ENCODE measurements at regions of chr2 and their contacts with region 1.

Region 1: DNA sequence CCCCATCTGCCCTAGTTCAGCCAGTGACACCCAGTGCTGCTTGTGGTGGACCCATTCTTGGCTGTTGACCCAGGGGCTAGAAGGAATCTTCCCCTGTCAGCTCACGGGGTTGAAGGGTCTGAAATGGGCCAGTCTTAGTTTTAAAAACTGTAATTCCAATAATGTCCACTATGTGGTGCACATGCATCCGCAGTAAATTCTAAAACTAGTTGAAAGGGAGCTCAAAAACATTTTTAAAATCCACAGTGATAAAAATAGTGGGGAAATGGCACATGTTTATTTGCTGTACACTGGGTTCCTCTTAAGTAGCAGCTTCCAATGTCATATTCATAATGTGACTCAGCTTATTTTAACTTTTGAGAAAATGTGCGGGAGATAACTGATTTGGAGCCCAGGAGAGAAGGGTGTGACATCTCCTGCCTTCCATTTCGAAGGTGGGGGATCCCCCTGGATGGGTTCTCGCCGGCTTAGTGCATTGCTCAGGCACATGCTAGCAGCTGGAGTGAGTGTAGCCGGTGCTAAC is 32.8 kb downstream of the GRHL1 start:
- DNase-seq: no peak
- ATAC-seq: peak; percentile 83
- H3K4me3 ChIP-seq: no peak overlapping the region
- H3K27ac ChIP-seq: peak overlapping the region in 3 of 4 donors; percentile 1 to 28 (median 20)
- H3K4me1 ChIP-seq: peaks cover 16% of the 10 kb centered on the region
- H3K27me3 ChIP-seq: no peaks in the 10 kb centered on the region
- CTCF ChIP-seq: peak; percentile 58 to 87 (median 80)
- POLR2A ChIP-seq: no peak

Region 2: GRCh38 chr2:9573840-9574239 is 410.4 kb before region 1 on chr2:
- intact Hi-C with region 1: no loop called
- DNase-seq: no peak
- ATAC-seq: no peak
- H3K4me3 ChIP-seq: no peak overlapping the region
- H3K27ac ChIP-seq: peak overlapping the region in 1 of 4 donors; percentile 31
- H3K4me1 ChIP-seq: no peaks in the 10 kb centered on the region
- H3K27me3 ChIP-seq: no peaks in the 10 kb centered on the region
- CTCF ChIP-seq: no peak
- POLR2A ChIP-seq: no peak

Region 3: DNA sequence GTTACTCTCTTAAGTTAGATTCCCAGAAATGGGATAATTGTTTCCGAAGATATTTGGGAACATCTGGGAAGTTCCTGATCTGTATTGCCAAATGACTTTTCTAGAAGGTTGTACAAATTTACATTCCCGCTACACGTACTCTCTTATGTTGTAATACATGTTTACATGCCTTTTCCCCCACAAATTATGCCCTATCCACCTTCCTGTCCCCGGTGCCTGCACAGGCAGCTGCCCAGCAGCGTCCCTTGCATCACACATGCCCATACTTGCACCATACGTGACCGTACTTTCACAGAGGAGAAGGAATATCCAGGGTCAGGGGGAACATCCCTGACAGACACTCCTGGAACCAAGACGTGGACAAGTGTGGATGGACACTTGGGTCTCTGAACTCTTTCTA is 34.9 kb after region 1 on chr2:
- intact Hi-C with region 1: no loop called
- DNase-seq: no peak
- ATAC-seq: peak; percentile 34
- H3K4me3 ChIP-seq: no peak overlapping the region
- H3K27ac ChIP-seq: no peak overlapping the region
- H3K4me1 ChIP-seq: peaks cover 13% of the 10 kb centered on the region
- H3K27me3 ChIP-seq: no peaks in the 10 kb centered on the region
- CTCF ChIP-seq: no peak
- POLR2A ChIP-seq: no peak

Region 4: DNA sequence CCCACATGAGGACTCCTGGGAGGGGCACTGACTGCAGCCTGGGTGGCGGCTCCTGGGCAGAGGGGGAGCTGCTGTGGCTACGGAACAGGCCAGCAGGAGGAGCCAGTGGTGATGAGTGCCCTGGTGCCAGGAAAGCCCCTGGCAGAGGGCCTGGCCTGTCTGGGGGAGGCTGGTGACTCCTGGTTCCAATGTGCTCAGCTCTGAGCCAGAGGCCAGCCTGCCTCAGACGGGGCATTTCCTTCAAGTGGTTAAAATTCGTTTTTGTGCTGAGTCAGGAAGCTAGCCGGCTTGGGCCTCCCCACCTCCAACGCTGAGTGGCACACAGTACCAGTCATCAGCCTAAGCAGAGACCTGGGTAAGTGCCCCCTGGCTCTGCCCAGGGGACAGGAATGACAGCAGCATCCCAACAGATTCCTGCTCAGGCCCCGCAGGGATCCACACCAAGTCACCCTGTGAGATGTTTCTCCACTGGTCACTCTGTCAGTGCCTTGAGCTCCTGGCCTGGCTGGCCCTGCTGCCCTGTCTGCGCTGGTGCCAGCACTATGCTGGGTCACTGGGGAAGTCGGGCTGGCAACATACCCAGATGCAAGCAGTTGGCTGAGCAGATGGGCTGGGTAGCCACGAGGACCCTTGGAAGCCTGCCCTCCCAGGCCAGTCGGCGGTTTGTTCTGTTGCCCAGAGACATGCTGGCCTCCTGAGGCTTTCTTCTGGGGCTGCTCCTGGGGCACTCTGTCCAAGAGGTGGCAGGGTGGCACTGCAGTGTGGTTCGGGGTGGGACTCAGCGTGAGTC is 52.0 kb after region 1 on chr2:
- intact Hi-C with region 1: loop called (anchors 10 kb)
- DNase-seq: peak; percentile 87 to 95 (median 92)
- ATAC-seq: peak; percentile 86
- H3K4me3 ChIP-seq: no peak overlapping the region
- H3K27ac ChIP-seq: peak overlapping the region; percentile 78 to 96 (median 84)
- H3K4me1 ChIP-seq: peaks cover 48% of the 10 kb centered on the region
- H3K27me3 ChIP-seq: no peaks in the 10 kb centered on the region
- CTCF ChIP-seq: peak; percentile 49 to 82 (median 77)
- POLR2A ChIP-seq: peak in 2 of 3 donors; percentile 27

Region 5: DNA sequence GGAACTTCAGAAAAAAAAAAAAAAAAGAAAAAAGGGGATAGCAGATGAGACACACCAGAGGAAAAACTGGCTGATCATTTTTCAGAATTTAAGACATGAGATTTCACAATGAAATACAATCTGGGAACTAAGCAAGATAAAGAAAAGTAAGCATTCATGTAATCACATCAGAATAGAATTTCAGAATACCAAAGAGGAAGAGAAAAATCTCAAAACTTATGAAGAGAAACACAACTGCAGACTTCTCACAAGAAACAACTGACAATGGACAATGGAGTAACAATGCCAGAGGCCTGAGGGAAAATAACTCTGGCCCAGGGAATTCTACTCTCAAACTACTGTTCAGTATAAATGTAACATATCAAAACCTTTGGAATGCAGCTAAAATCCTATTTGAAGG is 125.0 kb after region 1 on chr2:
- intact Hi-C with region 1: no loop called
- DNase-seq: no peak
- ATAC-seq: no peak
- H3K4me3 ChIP-seq: no peak overlapping the region
- H3K27ac ChIP-seq: no peak overlapping the region
- H3K4me1 ChIP-seq: peaks cover 3% of the 10 kb centered on the region
- H3K27me3 ChIP-seq: no peaks in the 10 kb centered on the region
- CTCF ChIP-seq: no peak
- POLR2A ChIP-seq: no peak

Region 6: GRCh38 chr2:11320698-11321492 is 1336.6 kb after region 1 on chr2:
- intact Hi-C with region 1: no loop called
- DNase-seq: no peak
- ATAC-seq: no peak
- H3K4me3 ChIP-seq: no peak overlapping the region
- H3K27ac ChIP-seq: no peak overlapping the region
- H3K4me1 ChIP-seq: peaks cover 26% of the 10 kb centered on the region
- H3K27me3 ChIP-seq: no peaks in the 10 kb centered on the region
- CTCF ChIP-seq: no peak
- POLR2A ChIP-seq: no peak